PC-3 (cell line): ENCODE measurements at regions of chr2 and their contacts with region 1.

Region 1: DNA sequence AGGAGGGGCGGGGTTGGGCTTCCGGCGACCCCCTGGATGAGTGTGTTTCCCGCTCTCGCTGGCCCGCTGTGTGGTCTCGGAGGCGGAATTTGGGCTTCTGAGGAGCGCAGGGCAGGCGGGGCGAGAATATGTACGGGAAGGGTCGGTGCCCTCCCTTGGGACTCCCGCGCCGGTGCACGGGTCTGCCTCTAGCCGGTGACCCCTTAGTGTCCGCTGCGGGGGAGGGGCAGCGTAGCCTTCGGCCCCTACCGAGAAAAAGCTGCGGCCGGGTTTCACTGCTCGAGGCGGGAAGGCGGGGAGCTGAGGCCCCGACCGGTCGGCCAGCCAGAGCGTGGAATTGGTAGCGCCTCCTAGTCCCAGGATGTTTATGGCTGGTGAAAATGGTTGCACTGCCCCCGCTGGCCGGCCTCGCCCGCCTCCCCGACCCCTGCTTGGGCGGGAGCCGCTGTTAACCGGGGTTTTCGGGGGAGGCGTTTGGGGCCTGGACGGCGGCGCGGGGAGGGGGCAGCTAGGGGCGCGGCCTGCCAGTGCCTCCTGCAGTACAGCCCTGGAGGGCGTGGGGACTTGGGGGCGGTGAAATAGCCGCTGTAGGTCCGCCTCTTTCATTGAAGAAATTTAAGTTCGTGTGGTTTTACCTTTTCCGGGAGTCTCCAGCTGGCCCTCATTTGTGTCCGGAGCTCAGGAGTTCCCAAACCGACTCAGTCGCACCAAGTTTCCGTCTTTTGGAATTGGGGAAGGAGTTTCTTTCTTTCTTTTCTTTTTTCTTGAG is at the start of gene UGP2:
- DNase-seq: peak; percentile 91
- ATAC-seq: peak; percentile 76
- H3K4me3 ChIP-seq: peak within 1 kb of the TSS; percentile 86
- H3K27ac ChIP-seq: peak within 1 kb of the TSS; percentile 81
- H3K4me1 ChIP-seq: peaks cover 28% of the 10 kb centered on the region
- H3K27me3 ChIP-seq: no peaks in the 10 kb centered on the region
- CTCF ChIP-seq: peak; percentile 42
- total RNA-seq, gene UGP2: 48.4 and 55.8 TPM in 2 replicates

Region 2: GRCh38 chr2:63588385-63589147 is 252.9 kb before region 1 on chr2 and contains the starts of genes MDH1 and WDPCP:
- CTCF ChIA-PET with region 1: no interaction called
- POLR2A ChIA-PET with region 1: interaction called, 6 read pairs
- intact Hi-C with region 1: loop called (anchors 1 kb)
- DNase-seq: peak; percentile 99
- ATAC-seq: peak; percentile 87
- H3K4me3 ChIP-seq: peak within 1 kb of the TSS; percentile 82
- H3K27ac ChIP-seq: peak within 1 kb of the TSS; percentile 73
- H3K4me1 ChIP-seq: peaks cover 29% of the 10 kb centered on the region
- H3K27me3 ChIP-seq: no peaks in the 10 kb centered on the region
- CTCF ChIP-seq: no peak
- total RNA-seq, gene MDH1: 249 and 304 TPM in 2 replicates
- total RNA-seq, gene WDPCP: 4.0 and 6.3 TPM in 2 replicates

Region 3: DNA sequence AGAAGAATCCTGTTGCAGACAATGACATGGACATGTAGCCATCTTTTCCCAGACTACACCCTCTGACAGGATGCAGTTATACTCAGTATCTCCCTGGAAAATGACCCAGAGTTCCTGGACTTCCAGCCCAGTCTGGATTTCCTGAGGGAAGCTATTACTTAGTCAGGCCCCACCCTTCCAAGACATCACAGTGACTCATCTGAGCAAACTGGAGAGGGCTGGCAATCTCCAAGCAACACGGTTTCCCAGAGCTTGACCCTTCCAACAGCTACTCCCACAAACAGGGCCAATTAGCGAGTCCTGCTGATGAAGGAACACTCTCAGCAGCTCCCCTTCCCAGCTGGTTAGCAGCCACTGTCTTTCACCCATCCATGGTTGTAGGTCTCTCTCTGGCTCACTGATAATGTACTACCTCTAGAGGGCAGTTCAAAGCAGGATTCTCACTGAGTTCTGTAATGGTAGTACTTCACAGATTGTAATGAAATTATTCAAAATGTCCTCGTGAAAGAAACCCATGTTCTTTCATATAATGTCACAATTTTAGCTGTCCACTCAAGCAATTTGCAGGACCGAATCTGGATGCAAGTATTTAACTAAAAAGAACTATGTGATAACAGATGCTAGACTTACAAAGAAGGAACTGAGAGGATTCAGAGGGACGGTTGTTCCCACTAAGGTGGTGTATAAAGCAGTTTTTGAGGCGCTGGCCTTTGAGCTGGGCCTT is 142.5 kb before region 1 on chr2:
- CTCF ChIA-PET with region 1: interaction called, 15 read pairs
- POLR2A ChIA-PET with region 1: interaction called, 26 read pairs
- intact Hi-C with region 1: loop called (anchors 1 kb)
- DNase-seq: peak; percentile 93
- ATAC-seq: peak; percentile 89
- H3K4me3 ChIP-seq: peak overlapping the region; percentile 34
- H3K27ac ChIP-seq: peak overlapping the region; percentile 93
- H3K4me1 ChIP-seq: peaks cover 41% of the 10 kb centered on the region
- H3K27me3 ChIP-seq: no peaks in the 10 kb centered on the region
- CTCF ChIP-seq: peak; percentile 72

Region 4: GRCh38 chr2:63736354-63736753 is 105.1 kb before region 1 on chr2:
- CTCF ChIA-PET with region 1: no interaction called
- POLR2A ChIA-PET with region 1: interaction called, 3 read pairs
- intact Hi-C with region 1: loop called (anchors 1 kb)
- DNase-seq: peak; percentile 45
- ATAC-seq: peak; percentile 56
- H3K4me3 ChIP-seq: no peak overlapping the region
- H3K27ac ChIP-seq: peak overlapping the region; percentile 65
- H3K4me1 ChIP-seq: peaks cover 52% of the 10 kb centered on the region
- H3K27me3 ChIP-seq: no peaks in the 10 kb centered on the region
- CTCF ChIP-seq: no peak